Transverse colon (tissue), 4 donors: ENCODE measurements at regions of chr21 and their contacts with region 1.

Region 1: DNA sequence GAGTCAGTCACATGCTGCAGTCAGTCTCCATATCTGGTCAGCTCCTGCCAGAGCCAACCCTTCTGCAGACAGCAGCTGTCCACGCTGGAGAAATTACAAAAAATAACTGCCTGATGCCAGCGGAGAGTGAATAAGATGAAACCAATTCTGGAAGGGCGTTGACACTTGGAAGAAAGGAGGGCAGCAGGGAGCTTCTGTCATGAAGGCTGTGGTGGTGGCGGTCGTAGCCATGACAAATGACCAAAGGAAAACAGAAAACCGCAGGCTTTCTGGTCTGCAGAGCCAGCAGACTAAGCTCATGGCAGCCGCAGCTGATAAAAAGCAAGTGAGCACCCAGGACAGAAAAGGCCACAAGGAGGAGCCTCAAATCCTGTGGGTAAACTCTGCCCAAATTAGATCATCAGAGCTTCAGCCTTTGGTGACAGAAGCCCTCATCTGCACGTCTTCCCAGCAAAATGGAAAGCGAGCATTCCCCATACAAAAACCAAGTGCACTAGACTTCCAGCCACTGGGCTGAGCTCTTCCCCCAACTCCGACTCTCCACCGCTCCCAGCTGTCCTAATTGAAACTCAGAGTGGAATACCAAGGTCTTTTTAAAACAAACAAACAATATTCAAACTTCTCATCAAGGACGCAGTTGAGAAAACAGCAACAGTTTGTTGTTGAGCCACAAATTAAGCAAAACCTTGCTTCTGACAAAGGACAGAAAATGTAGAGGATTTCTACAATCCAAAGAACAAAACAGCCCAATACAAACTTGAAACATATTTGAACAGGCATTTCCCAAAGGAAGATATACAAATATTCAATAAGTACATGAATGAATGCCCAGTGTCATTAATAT is 28.7 kb downstream of the RSPH1 start:
- DNase-seq: peak; percentile 41
- H3K4me3 ChIP-seq: no peak overlapping the region
- H3K27ac ChIP-seq: peak overlapping the region; percentile 68 to 80 (median 78)
- H3K4me1 ChIP-seq: peaks cover 23 to 76% (median 49%) of the 10 kb centered on the region in 4 donors
- H3K27me3 ChIP-seq: no peaks in the 10 kb centered on the region
- CTCF ChIP-seq: peak in 4 of 5 experiments; percentile 6 to 20 (median 12)
- EP300 ChIP-seq: no peak
- POLR2A ChIP-seq: no peak

Region 2: DNA sequence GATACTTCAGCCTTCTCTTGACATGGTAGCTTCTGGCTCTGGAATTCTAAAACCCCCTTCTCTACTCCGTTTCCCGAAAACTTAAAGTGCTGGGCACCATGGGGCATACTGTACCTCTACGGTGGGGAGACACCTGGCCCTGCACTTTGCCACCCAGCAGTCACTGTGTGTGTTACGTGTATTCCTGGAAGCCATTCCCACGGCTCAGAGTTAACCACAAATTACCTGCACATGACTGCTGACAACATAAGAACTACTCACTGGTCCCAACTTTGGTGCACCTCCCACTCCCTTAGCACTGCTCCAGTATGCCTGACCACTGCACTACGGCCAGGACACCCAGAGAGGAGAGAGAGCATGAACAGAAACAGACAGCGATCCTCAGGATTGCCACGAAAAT is 930.0 kb before region 1 on chr21:
- in situ Hi-C with region 1: no loop called
- intact Hi-C with region 1: no loop called
- DNase-seq: no peak
- H3K4me3 ChIP-seq: no peak overlapping the region
- H3K27ac ChIP-seq: no peak overlapping the region
- H3K4me1 ChIP-seq: peaks cover 0 to 12% (median 2%) of the 10 kb centered on the region in 4 donors
- H3K27me3 ChIP-seq: no peaks in the 10 kb centered on the region
- CTCF ChIP-seq: no peak
- EP300 ChIP-seq: no peak
- POLR2A ChIP-seq: no peak

Region 3: GRCh38 chr21:42164064-42164789 is 303.1 kb before region 1 on chr21:
- in situ Hi-C with region 1: loop called in 1 of 4 experiments (anchors 25 kb)
- intact Hi-C with region 1: no loop called
- DNase-seq: peak; percentile 83
- H3K4me3 ChIP-seq: no peak overlapping the region
- H3K27ac ChIP-seq: peak overlapping the region; percentile 61 to 80 (median 74)
- H3K4me1 ChIP-seq: peaks cover 0 to 23% (median 10%) of the 10 kb centered on the region in 4 donors
- H3K27me3 ChIP-seq: no peaks in the 10 kb centered on the region
- CTCF ChIP-seq: peak; percentile 47 to 81 (median 57)
- EP300 ChIP-seq: no peak
- POLR2A ChIP-seq: no peak

Region 4: DNA sequence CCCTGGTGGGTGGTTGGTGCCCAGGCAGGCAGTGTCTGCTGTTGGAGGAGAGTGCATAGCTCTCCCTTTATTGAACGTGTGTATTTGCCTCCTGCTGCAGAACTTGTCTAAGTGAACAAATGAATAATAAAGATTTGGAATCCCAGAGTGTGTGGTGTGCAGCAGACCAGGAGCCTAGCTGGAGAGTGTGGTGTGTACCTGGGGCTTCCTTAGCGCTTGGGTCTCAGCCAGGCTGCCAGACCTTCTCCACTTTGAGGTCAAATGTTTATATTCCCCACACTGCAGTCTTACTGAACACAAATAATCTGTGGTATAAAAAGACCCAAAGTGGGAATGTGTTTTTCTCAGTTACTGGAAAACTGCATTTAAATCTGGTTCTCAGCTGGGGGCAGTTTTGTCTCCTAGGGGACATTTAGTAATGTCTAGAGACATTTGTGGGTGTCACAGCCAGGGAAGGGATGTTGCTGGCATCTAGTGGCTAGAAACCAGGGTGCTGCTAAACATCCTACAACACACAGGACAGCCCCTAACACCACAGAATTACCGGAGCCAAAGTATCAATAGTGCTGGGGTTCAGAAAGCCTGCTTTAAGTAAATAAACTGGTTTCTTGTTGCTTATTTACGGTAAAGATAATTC is 69.9 kb after region 1 on chr21:
- in situ Hi-C with region 1: loop called in 1 of 4 experiments (anchors 10 kb)
- intact Hi-C with region 1: no loop called
- DNase-seq: no peak
- H3K4me3 ChIP-seq: no peak overlapping the region
- H3K27ac ChIP-seq: no peak overlapping the region
- H3K4me1 ChIP-seq: peaks cover 0 to 36% (median 26%) of the 10 kb centered on the region in 4 donors
- H3K27me3 ChIP-seq: no peaks in the 10 kb centered on the region
- CTCF ChIP-seq: peak in 2 of 5 experiments; percentile 16 to 17
- EP300 ChIP-seq: no peak
- POLR2A ChIP-seq: no peak